Heart right ventricle (tissue), 16 donors: ENCODE measurements at regions of chr10 and their contacts with region 1.

Region 1: DNA sequence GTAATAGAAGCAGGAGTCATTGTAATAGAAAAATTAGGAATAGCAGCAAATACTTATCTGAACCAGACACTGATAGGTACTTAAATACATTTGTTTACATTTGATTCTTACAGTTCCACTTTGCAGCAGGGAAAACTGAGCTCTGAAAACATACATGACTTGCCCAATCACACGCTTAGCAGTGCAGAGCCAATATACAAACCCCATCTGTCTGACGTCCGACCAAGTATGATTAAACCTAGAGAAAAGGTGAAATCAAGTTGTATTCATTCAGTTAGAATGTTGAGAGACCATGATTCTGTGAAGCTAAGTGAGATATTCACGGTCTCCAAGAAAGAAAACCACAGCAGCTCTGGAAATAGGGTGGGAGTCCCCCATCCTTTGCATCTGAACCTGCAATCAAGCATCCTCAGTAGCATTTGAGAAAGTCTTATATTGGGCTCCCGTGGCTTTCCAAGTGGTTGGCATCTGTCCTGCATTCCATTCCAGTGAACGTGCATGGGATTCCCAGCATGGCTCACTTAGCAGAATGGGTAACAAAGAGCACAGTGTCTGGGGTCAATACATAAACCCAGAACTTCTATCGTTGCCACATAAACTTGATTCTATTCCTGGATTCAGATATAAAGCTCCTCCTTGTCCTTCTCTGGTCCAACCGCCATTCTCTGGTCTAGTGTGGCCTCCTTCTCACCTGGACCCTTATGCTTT is 148.7 kb upstream of the RSU1 start:
- DNase-seq: no peak
- ATAC-seq: peak in 2 of 8 donors; percentile 35 to 83
- H3K4me3 ChIP-seq: no peak overlapping the region
- H3K27ac ChIP-seq: peak overlapping the region in 2 of 10 donors; percentile 81 to 83
- H3K4me1 ChIP-seq: peaks cover 0 to 40% (median 32%) of the 10 kb centered on the region in 9 donors
- H3K27me3 ChIP-seq: peaks cover 0 to 6% (median 0%) of the 10 kb centered on the region in 7 donors
- CTCF ChIP-seq: no peak

Region 2: DNA sequence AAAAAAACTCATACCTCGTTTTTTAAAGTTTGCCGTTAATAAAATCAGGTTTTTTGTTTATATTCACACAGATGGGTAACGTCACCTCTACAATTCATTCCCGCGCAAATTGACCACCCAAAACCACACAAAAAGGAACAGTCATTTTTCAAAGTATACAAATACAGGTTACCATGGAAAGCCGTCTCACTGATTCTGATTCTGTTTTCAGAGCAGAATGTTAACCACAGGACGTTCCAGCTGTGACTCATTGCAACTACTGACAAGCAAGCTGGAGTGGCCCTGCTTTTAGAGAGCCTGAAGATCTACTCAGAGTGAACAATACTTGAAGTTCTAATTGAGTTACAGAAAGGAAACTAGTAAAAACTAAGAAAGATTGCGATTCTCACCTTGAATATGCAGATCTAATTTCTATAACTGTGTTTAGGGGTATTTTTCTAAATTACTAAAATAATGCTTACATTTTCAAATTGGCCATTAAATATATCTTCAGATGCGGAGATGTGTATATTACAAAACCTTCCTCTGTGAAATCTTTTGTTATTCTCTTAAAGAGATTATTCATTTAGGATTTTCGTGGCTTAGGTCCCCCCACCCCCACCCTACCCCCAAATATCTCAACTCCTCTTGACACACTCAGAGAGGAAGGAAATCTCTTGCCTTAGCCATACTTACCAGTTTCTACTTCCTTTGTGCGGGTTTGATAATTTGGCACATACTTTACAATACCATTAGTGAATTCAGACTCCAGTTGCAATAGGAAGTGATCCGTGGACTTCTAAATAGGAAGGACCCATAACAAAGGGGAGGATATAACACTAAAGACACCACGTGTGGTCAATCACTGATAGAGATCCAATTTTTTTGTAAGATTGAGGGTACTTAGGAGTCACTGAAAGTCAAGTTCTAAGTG is 57.7 kb after region 1 on chr10:
- intact Hi-C with region 1: loop called in 1 of 10 experiments (anchors 10 kb)
- DNase-seq: peak in 1 of 2 donors; percentile 79
- ATAC-seq: peak; percentile 74 to 93 (median 88)
- H3K4me3 ChIP-seq: peak overlapping the region in 1 of 10 donors; percentile 2
- H3K27ac ChIP-seq: peak overlapping the region in 9 of 10 donors; percentile 13 to 84 (median 69)
- H3K4me1 ChIP-seq: peaks cover 4 to 66% (median 32%) of the 10 kb centered on the region in 9 donors
- H3K27me3 ChIP-seq: no peaks in the 10 kb centered on the region
- CTCF ChIP-seq: no peak

Region 3: GRCh38 chr10:17181758-17182157 is 215.9 kb after region 1 on chr10:
- intact Hi-C with region 1: no loop called
- DNase-seq: no peak
- ATAC-seq: no peak
- H3K4me3 ChIP-seq: no peak overlapping the region
- H3K27ac ChIP-seq: no peak overlapping the region
- H3K4me1 ChIP-seq: no peaks in the 10 kb centered on the region
- H3K27me3 ChIP-seq: no peaks in the 10 kb centered on the region
- CTCF ChIP-seq: no peak